CD14-positive monocyte (primary cell): ENCODE measurements at regions of chr12 and their contacts with region 1.

Region 1: DNA sequence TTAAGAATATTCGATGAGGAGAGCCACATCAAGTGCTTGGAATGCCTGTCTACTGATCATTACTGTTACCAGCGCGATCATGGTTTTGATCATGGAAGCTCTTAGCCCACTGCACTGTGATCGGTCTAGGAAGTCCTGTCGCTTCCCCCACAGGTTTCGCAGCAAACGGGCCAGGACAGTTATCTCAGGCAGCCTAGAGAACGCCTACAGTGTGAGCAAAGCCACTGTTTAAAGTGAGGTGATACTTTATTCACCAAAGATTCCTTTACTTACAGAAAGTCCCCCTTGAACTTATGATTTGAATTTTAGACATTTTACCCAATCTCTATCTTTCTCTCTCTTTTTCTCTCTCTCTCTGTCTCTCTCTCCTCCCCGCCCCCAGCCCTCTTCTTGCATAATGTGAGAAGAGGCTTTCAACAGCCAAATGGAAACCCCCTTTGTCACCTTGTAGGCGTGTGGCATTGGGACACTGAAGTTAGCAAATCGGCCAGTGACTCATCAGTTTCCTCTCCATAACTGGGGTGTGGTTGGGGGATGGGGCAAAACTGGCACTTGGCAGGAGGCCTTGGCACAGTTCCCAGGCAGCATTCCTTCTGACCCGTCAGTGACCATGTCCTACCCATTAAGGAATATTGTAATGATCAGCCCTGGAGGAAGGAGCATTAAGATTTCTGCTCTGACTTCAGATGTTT is 214.8 kb downstream of the CHST11 start:
- DNase-seq: peak; percentile 96 to 99 (median 99)
- H3K4me3 ChIP-seq: peak overlapping the region in 1 of 3 experiments; percentile 36
- H3K4me3 Mint-ChIP-seq: peak overlapping the region; percentile 65 to 84
- H3K27ac ChIP-seq: peak overlapping the region; percentile 97
- H3K27ac Mint-ChIP-seq: peak overlapping the region; percentile 98 to 100 (median 99)
- H3K4me1 ChIP-seq: peaks cover 86 to 94% of the 10 kb centered on the region in 2 donors
- H3K4me1 Mint-ChIP-seq: peaks cover 84% of the 10 kb centered on the region
- H3K27me3 ChIP-seq: no peaks in the 10 kb centered on the region
- H3K27me3 Mint-ChIP-seq: peaks cover 0 to 1% (median 0%) of the 10 kb centered on the region in 3 donors
- CTCF ChIP-seq: no peak

Region 2: GRCh38 chr12:104604070-104604994 is 67.2 kb before region 1 on chr12:
- intact Hi-C with region 1: loop called in 1 of 2 experiments (anchors 10 kb)
- DNase-seq: peak; percentile 94 to 97 (median 95)
- H3K4me3 ChIP-seq: peak overlapping the region in 1 of 3 experiments; percentile 39
- H3K4me3 Mint-ChIP-seq: peak overlapping the region; percentile 65 to 71
- H3K27ac ChIP-seq: peak overlapping the region; percentile 71 to 92
- H3K27ac Mint-ChIP-seq: peak overlapping the region; percentile 95 to 99 (median 98)
- H3K4me1 ChIP-seq: peaks cover 61 to 74% of the 10 kb centered on the region in 2 donors
- H3K4me1 Mint-ChIP-seq: peaks cover 86% of the 10 kb centered on the region
- H3K27me3 ChIP-seq: no peaks in the 10 kb centered on the region
- H3K27me3 Mint-ChIP-seq: peaks cover 0 to 4% (median 0%) of the 10 kb centered on the region in 3 donors
- CTCF ChIP-seq: no peak

Region 3: GRCh38 chr12:104653730-104654664 is 17.6 kb before region 1 on chr12:
- intact Hi-C with region 1: loop called in 1 of 2 experiments (anchors 2 kb)
- DNase-seq: peak in 1 of 3 donors; percentile 19
- H3K4me3 ChIP-seq: no peak overlapping the region
- H3K4me3 Mint-ChIP-seq: no peak overlapping the region
- H3K27ac ChIP-seq: peak overlapping the region in 1 of 2 donors; percentile 97
- H3K27ac Mint-ChIP-seq: peak overlapping the region; percentile 69 to 99 (median 88)
- H3K4me1 ChIP-seq: peaks cover 65 to 72% of the 10 kb centered on the region in 2 donors
- H3K4me1 Mint-ChIP-seq: peaks cover 85% of the 10 kb centered on the region
- H3K27me3 ChIP-seq: no peaks in the 10 kb centered on the region
- H3K27me3 Mint-ChIP-seq: no peaks in the 10 kb centered on the region
- CTCF ChIP-seq: peak; percentile 44

Region 4: GRCh38 chr12:104748356-104749128 is 77.0 kb after region 1 on chr12:
- intact Hi-C with region 1: loop called in 1 of 2 experiments (anchors 5 kb)
- DNase-seq: peak in 2 of 3 donors; percentile 44 to 48
- H3K4me3 ChIP-seq: peak overlapping the region in 1 of 3 experiments; percentile 54
- H3K4me3 Mint-ChIP-seq: peak overlapping the region; percentile 9 to 45
- H3K27ac ChIP-seq: peak overlapping the region; percentile 33 to 81
- H3K27ac Mint-ChIP-seq: peak overlapping the region; percentile 89 to 96 (median 92)
- H3K4me1 ChIP-seq: peaks cover 76 to 77% of the 10 kb centered on the region in 2 donors
- H3K4me1 Mint-ChIP-seq: peaks cover 73% of the 10 kb centered on the region
- H3K27me3 ChIP-seq: no peaks in the 10 kb centered on the region
- H3K27me3 Mint-ChIP-seq: no peaks in the 10 kb centered on the region
- CTCF ChIP-seq: no peak

Region 5: GRCh38 chr12:104805186-104805585 is 133.6 kb after region 1 on chr12:
- intact Hi-C with region 1: no loop called
- DNase-seq: no peak
- H3K4me3 ChIP-seq: no peak overlapping the region
- H3K4me3 Mint-ChIP-seq: no peak overlapping the region
- H3K27ac ChIP-seq: no peak overlapping the region
- H3K27ac Mint-ChIP-seq: peak overlapping the region in 1 of 7 donors; percentile 25
- H3K4me1 ChIP-seq: peaks cover 0 to 2% of the 10 kb centered on the region in 2 donors
- H3K4me1 Mint-ChIP-seq: peaks cover 12% of the 10 kb centered on the region
- H3K27me3 ChIP-seq: peaks cover 0 to 3% of the 10 kb centered on the region in 2 donors
- H3K27me3 Mint-ChIP-seq: no peaks in the 10 kb centered on the region
- CTCF ChIP-seq: no peak